Activated naive CD4-positive, alpha-beta T cell treated with anti-CD3 and anti-CD28 coated beads, Interleukin-2, amount 10 ng/mL, durations not matched to agents 7 days and 5 days (primary cell): ENCODE measurements at regions of chr6 and their contacts with region 1.

Region 1: GRCh38 chr6:2848851-2849250 is 7.2 kb upstream of the SERPINB1 start:
- DNase-seq: peak; percentile 84
- H3K4me3 Mint-ChIP-seq: peak overlapping the region; percentile 31
- H3K27ac Mint-ChIP-seq: peak overlapping the region; percentile 58
- H3K4me1 Mint-ChIP-seq: peaks cover 56% of the 10 kb centered on the region
- H3K27me3 Mint-ChIP-seq: no peaks in the 10 kb centered on the region

Region 2: DNA sequence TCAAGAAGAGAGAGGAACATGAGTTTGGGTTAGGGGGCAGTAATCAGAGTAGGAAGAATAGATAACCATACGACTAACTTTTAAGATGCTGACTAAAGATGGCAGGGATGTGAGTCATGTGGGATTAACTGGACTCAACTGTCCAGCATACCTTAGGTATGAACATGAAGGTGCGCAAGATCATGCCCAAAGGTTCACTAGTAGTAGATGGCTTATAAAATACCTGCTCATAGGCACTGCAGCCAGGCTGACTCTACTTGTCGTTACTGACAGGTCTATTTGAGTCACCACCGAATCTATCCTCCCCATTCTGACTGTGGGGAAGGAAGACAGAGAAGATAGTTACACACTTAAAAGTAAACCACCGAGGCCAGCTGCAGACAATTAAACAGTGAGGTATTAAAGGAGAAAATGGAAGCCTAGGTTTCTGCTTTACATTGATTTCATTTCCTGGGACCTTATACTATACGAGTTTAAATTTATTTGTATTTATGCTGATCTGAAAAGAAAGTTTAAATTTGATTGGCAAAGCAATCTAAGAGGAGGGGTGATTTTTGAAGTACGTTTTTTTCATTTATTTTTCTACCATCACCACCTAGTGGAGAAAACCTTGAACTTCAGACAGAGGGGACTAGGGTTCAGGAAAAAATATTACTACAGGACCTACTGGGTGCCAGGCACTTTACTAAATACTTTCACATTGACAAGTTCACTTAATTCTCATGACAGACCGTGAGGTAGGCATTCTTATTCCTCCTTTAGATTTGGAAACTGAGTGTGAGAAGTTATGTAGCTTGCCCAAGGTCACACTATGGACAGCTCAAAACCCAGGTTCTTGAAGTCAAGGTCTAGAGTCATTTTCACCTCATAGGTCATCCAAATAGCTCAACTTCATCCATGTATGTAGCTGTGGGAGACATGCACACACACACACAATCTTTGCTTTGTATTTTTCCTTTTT is 87.7 kb before region 1 on chr6:
- CTCF ChIA-PET with region 1: no interaction called
- DNase-seq: no peak
- H3K4me3 Mint-ChIP-seq: peak overlapping the region; percentile 49
- H3K27ac Mint-ChIP-seq: no peak overlapping the region
- H3K4me1 Mint-ChIP-seq: peaks cover 20% of the 10 kb centered on the region
- H3K27me3 Mint-ChIP-seq: no peaks in the 10 kb centered on the region

Region 3: GRCh38 chr6:2862712-2863181 is 13.9 kb after region 1 on chr6:
- CTCF ChIA-PET with region 1: interaction called, 13 read pairs
- DNase-seq: no peak
- H3K4me3 Mint-ChIP-seq: no peak overlapping the region
- H3K27ac Mint-ChIP-seq: peak overlapping the region; percentile 91
- H3K4me1 Mint-ChIP-seq: peaks cover 74% of the 10 kb centered on the region
- H3K27me3 Mint-ChIP-seq: no peaks in the 10 kb centered on the region

Region 4: GRCh38 chr6:2891768-2892170 is 42.9 kb after region 1 on chr6:
- CTCF ChIA-PET with region 1: interaction called, 10 read pairs
- DNase-seq: peak; percentile 87
- H3K4me3 Mint-ChIP-seq: peak overlapping the region; percentile 71
- H3K27ac Mint-ChIP-seq: peak overlapping the region; percentile 87
- H3K4me1 Mint-ChIP-seq: peaks cover 62% of the 10 kb centered on the region
- H3K27me3 Mint-ChIP-seq: no peaks in the 10 kb centered on the region

Region 5: DNA sequence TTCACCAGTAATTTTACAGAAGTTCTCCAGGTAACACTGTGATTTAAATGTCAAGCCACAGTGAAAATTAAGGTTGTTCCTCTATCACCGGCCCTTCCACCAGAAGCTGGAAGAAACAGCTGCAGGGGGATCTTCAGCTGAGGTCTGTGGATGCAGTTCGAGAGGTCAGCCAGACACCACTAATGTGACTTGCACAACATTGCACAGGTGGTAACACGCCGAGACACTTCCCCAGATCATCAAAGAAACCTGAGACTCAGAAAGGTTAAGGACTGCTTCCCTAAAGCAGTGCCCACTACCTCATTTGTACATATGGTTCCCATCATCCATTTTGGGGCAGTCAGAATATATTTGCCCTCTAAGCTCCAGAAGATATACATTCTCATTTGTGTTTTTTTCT is 62.3 kb after region 1 on chr6:
- CTCF ChIA-PET with region 1: interaction called, 77 read pairs
- DNase-seq: no peak
- H3K4me3 Mint-ChIP-seq: no peak overlapping the region
- H3K27ac Mint-ChIP-seq: no peak overlapping the region
- H3K4me1 Mint-ChIP-seq: peaks cover 29% of the 10 kb centered on the region
- H3K27me3 Mint-ChIP-seq: peaks cover 1% of the 10 kb centered on the region

Region 6: DNA sequence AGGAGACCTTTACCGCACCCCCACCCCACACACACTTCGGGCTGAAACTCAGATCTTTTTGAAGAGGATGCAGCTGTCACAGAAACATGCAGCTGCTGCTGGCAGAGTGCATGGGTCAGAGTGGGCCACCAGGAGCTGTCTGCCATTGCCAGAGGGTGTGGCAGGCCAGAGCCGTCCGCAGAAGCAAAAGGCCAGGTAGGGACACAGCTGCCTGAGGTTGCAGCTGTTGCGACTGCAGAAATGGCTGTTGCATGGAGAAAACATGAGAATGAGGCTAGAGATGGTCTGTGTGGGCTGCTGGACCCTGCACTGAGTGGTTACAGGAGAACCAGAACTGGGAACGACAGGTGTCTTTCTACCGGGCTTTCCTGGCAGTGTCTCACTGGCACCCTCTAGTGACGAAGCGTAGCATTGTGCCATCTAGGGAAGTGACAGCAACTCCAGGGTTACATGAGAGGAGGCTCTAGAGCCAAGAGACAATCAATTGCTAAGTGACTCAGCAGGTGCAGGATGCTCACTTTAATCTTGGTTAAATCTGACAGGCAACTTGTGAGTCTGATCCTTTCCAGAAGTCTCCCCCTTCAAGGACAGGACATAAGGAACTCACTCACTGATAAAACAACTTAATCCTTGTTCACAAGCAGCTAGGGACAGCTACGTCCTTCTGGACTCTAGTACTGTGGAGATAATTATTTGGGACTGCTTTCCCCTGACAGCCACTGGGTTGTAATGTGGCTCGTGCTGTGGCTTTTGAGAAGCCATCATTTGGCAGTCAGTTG is 83.3 kb after region 1 on chr6:
- CTCF ChIA-PET with region 1: interaction called, 80 read pairs
- DNase-seq: peak; percentile 92
- H3K4me3 Mint-ChIP-seq: no peak overlapping the region
- H3K27ac Mint-ChIP-seq: peak overlapping the region; percentile 49
- H3K4me1 Mint-ChIP-seq: peaks cover 24% of the 10 kb centered on the region
- H3K27me3 Mint-ChIP-seq: peaks cover 8% of the 10 kb centered on the region